Activated CD4-positive, alpha-beta memory T cell treated with anti-CD3 and anti-CD28 coated beads for 36 hours (primary cell): ENCODE measurements at regions of chr6 and their contacts with region 1.

Region 1: GRCh38 chr6:143940011-143940597 is 68.0 kb downstream of the PLAGL1 start:
- DNase-seq: peak; percentile 70
- H3K4me3 Mint-ChIP-seq: no peak overlapping the region
- H3K27ac Mint-ChIP-seq: no peak overlapping the region
- H3K4me1 Mint-ChIP-seq: peaks cover 2% of the 10 kb centered on the region
- H3K27me3 Mint-ChIP-seq: peaks cover 2% of the 10 kb centered on the region

Region 2: DNA sequence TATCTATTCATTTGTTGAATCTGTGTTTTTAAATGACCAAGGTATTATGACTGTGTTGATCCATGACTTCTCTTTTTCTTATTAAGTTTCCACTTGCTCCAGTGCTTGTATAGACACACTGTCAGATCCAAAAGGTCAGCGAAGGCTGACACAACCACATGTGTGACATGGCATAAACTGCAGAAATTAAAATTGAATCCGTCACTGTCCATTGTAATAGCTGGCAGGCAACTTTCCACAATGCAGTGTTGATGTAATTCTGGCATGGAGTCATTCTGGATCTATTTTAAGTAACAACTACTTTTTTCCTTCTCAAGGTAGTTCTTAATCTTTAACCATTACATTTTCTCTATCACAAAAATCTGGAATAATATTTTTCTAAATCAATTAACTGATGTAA is 734.1 kb before region 1 on chr6:
- CTCF ChIA-PET with region 1: no interaction called
- POLR2A ChIA-PET with region 1: no interaction called
- intact Hi-C with region 1: no loop called
- DNase-seq: no peak
- H3K4me3 Mint-ChIP-seq: no peak overlapping the region
- H3K27ac Mint-ChIP-seq: no peak overlapping the region
- H3K4me1 Mint-ChIP-seq: no peaks in the 10 kb centered on the region
- H3K27me3 Mint-ChIP-seq: no peaks in the 10 kb centered on the region

Region 3: GRCh38 chr6:143575440-143575839 is 364.7 kb before region 1 on chr6:
- CTCF ChIA-PET with region 1: interaction called, 28 read pairs
- POLR2A ChIA-PET with region 1: no interaction called
- intact Hi-C with region 1: loop called (anchors 1 kb)
- DNase-seq: peak; percentile 56
- H3K4me3 Mint-ChIP-seq: no peak overlapping the region
- H3K27ac Mint-ChIP-seq: no peak overlapping the region
- H3K4me1 Mint-ChIP-seq: peaks cover 10% of the 10 kb centered on the region
- H3K27me3 Mint-ChIP-seq: no peaks in the 10 kb centered on the region

Region 4: GRCh38 chr6:143901885-143902750 is 38.0 kb before region 1 on chr6:
- CTCF ChIA-PET with region 1: interaction called, 12 read pairs
- POLR2A ChIA-PET with region 1: no interaction called
- intact Hi-C with region 1: no loop called
- DNase-seq: peak; percentile 14
- H3K4me3 Mint-ChIP-seq: no peak overlapping the region
- H3K27ac Mint-ChIP-seq: no peak overlapping the region
- H3K4me1 Mint-ChIP-seq: peaks cover 10% of the 10 kb centered on the region
- H3K27me3 Mint-ChIP-seq: no peaks in the 10 kb centered on the region

Region 5: GRCh38 chr6:144013486-144013909 is 73.4 kb after region 1 on chr6:
- CTCF ChIA-PET with region 1: interaction called, 121 read pairs
- POLR2A ChIA-PET with region 1: no interaction called
- intact Hi-C with region 1: loop called (anchors 1 kb)
- DNase-seq: peak; percentile 71
- H3K4me3 Mint-ChIP-seq: no peak overlapping the region
- H3K27ac Mint-ChIP-seq: no peak overlapping the region
- H3K4me1 Mint-ChIP-seq: peaks cover 3% of the 10 kb centered on the region
- H3K27me3 Mint-ChIP-seq: peaks cover 7% of the 10 kb centered on the region

Region 6: GRCh38 chr6:144090384-144090783 is 150.3 kb after region 1 on chr6:
- CTCF ChIA-PET with region 1: interaction called, 10 read pairs
- POLR2A ChIA-PET with region 1: no interaction called
- intact Hi-C with region 1: loop called (anchors 1 kb)
- DNase-seq: no peak
- H3K4me3 Mint-ChIP-seq: no peak overlapping the region
- H3K27ac Mint-ChIP-seq: no peak overlapping the region
- H3K4me1 Mint-ChIP-seq: peaks cover 20% of the 10 kb centered on the region
- H3K27me3 Mint-ChIP-seq: no peaks in the 10 kb centered on the region

Region 7: DNA sequence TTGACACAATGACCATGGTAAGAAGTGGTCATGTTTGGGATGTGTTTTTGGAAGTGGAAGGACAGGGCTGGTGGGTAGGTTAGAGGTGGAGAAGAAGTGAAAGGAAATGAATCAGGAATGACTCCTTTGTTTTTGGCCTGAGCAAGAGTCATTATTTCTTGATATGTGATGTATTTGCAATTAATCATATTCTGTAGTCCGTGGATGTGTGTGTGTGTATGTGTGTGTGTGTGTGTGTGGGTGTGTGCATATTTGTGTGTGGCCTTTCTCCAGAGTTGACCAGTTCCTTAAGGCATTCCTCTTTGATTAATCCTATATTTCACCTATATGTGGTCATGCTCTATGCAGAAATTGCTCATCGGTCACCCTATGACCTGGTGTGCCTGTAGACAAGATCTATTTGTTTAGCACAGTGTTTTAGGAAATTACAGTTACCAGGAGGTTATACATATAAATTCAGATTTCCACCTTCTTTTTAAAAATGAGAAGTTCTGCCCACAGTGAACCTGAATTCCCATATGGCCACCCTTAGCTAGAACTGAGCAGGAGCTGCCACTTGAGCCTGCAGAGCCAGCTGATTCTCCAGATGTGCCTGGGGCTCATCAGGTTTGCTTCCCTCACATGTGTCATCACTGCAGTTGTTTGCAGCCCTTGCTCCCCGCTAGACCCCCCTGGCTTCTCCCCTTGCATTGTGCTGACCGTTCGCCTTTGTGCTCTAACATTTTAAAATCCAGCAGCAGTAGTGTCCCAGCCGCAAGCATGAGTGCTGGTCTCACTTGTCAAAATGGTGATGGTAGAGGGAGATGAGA is 475.9 kb after region 1 on chr6:
- CTCF ChIA-PET with region 1: no interaction called
- POLR2A ChIA-PET with region 1: no interaction called
- intact Hi-C with region 1: no loop called
- DNase-seq: no peak
- H3K4me3 Mint-ChIP-seq: no peak overlapping the region
- H3K27ac Mint-ChIP-seq: no peak overlapping the region
- H3K4me1 Mint-ChIP-seq: peaks cover 59% of the 10 kb centered on the region
- H3K27me3 Mint-ChIP-seq: no peaks in the 10 kb centered on the region

Region 8: DNA sequence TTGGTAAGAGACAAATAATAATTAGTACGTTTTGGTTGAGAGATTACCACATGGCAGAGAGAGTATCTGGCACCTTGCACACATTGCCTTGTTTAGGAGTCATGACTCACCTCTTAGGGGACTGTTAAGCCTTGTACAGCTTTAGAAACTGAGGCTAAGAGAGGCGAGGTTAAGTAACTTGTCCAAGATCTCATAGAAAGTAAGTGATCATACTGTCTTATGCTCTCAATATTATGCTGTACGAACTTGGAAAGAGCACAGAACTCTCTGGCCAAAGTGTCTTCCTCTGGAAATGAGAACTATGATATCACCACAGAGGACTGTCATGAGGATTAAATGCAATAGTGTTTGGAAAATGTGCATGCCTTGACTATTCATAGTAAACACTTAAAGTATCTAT is 594.1 kb after region 1 on chr6:
- CTCF ChIA-PET with region 1: no interaction called
- POLR2A ChIA-PET with region 1: no interaction called
- intact Hi-C with region 1: no loop called
- DNase-seq: no peak
- H3K4me3 Mint-ChIP-seq: no peak overlapping the region
- H3K27ac Mint-ChIP-seq: no peak overlapping the region
- H3K4me1 Mint-ChIP-seq: peaks cover 5% of the 10 kb centered on the region
- H3K27me3 Mint-ChIP-seq: no peaks in the 10 kb centered on the region